A549 (cell line): ENCODE measurements at regions of chr11 and their contacts with region 1.

Region 1: DNA sequence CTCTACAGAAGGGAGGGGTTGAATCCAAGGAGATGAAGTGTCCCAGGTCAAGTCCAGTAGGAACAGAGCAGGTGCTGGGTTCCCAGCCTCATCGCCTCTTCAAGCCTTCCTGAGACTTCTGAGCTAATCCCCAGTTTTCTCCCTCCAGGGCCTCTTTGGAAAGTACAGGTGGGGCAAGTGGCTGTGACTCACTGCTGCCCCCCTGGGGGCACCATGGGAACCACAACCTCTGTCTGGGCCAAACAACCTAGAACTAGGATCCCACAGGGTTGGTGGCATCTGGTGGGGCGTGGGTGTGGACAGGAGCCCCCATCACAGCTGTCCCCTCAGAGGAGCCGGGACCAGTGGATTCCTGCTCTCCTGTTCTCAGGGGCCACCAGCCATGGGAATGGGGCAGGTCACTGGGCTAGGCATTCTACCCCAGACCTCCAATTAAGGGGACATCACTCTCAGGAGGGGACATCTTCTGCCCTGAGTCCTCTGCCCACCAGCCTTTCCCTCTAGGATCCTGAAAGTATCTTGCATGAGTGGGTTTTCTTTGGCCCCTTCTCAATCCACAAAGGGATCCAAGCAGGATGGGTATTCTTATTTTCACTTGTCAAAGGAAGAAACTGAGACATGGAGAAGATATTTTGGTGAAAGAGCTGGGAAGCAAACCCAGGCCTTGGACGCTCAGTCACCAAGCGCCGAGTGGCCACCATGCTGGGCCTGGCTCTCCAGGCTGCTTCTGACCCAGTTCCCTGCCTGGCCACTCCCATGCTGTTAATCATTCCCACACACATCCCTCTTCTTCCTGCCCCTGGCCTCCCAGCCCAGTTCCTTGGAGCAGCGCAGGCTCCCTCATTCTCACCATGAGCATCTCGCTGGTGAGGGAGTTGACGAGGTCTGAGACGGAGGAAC is 23.8 kb downstream of the LRRC10B start:
- DNase-seq: peak; percentile 49 to 87
- ATAC-seq: peak; percentile 42 to 83; a peak in 5 of 6 replicates
- H3K4me3 ChIP-seq: no peak overlapping the region
- H3K27ac ChIP-seq: peak overlapping the region in 1 of 2 experiments; percentile 56; a peak in 2 of 6 replicates
- H3K4me1 ChIP-seq: peaks cover 9% of the 10 kb centered on the region
- CTCF ChIP-seq: peak; percentile 78
- EP300 ChIP-seq: no peak
- POLR2A ChIP-seq: no peak
- RAD21 ChIP-seq: peak; percentile 38 to 44; a peak in 3 of 5 replicates

Region 2: GRCh38 chr11:61549662-61550568 is 17.5 kb after region 1 on chr11:
- CTCF ChIA-PET with region 1: interaction called, 28 read pairs
- POLR2A ChIA-PET with region 1: no interaction called
- DNase-seq: no peak
- ATAC-seq: 0 out of 6 replicates have a peak, but pooled peaks of 1 of the 2 experiments have one; percentile 4
- H3K4me3 ChIP-seq: no peak overlapping the region
- H3K27ac ChIP-seq: no peak overlapping the region; a peak in 1 of 6 replicates
- H3K4me1 ChIP-seq: peaks cover 10% of the 10 kb centered on the region
- CTCF ChIP-seq: no peak
- EP300 ChIP-seq: no peak
- POLR2A ChIP-seq: no peak
- RAD21 ChIP-seq: no peak

Region 3: DNA sequence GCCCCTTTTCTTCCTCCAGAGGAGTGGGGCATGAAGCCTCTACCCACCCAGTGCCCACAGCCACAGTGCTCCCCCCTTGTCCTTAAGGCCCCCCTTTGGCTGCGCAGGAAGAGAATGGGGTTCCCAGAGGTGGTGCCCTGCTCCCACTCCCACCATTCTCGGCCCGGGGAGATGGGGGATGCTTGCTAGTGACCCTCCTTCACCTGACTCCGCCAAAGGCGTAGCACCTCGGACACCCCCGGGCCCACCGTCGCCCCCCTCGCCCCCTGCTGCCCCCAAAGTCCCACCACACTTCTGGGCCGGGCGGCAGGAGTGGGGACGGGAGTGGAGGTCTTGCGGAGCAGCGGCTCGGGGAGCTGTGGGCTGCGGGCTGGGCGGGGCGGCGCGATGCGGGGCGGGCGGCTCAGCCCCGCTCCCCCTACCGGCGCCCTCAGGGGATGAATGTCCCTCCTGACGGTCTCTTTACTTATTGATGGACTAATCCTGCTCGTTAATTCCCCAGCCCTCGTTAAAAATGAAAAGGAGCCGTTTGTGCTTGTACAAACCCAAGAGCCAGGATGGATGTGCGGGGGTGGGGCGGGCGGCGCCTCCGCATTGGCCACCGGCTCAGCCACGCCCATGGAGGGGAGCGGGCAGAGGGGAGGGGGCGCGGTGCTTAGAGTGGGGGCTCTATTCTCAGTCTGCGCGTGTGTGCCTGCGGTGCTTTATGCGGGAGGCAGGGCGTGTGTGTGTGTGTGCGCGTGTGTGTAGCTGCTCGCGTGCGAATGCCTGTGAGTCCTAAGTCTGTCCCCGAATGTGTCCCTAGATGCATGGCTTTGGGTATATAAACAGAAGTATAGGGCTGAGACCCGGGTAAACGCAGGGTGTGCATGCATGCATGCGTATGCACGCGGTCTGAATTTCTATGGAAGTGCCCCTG is 22.9 kb after region 1 on chr11:
- CTCF ChIA-PET with region 1: interaction called, 27 read pairs
- POLR2A ChIA-PET with region 1: no interaction called
- DNase-seq: peak in 1 of 2 experiments; percentile 35
- ATAC-seq: peak; percentile 4 to 56; a peak in 3 of 6 replicates
- H3K4me3 ChIP-seq: 0 out of 3 replicates have a peak overlapping the region, but pooled peaks have one; percentile 2
- H3K27ac ChIP-seq: no peak overlapping the region
- H3K4me1 ChIP-seq: peaks cover 14% of the 10 kb centered on the region
- CTCF ChIP-seq: no peak
- EP300 ChIP-seq: no peak
- POLR2A ChIP-seq: no peak
- RAD21 ChIP-seq: no peak